T-cell (primary cell): ENCODE measurements at regions of chr7 and their contacts with region 1.

Region 1: DNA sequence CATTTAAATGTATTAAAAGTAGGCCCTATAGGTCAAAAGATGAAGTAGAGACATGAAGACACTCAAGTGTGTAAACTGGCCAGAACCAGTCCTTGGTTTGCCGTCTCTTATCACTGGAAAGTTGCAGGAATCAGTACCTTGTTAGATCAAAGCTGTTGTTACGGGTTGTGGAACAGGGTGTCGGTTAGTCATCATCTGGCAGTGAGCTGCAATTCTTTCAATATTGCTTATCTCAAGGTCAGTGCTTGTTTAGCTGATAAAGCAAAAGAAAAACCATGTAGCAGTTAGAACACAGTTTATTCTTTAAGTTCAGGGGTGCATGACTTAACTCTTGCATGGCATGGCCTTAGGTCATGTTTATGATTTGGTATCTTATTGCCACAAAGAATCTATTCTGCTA is 10.0 kb upstream of the SLC13A1 start:
- DNase-seq: no peak
- ATAC-seq: no peak
- H3K4me3 ChIP-seq: no peak overlapping the region
- H3K4me3 Mint-ChIP-seq: no peak overlapping the region
- H3K27ac ChIP-seq: no peak overlapping the region
- H3K27ac Mint-ChIP-seq: no peak overlapping the region
- H3K4me1 ChIP-seq: no peaks in the 10 kb centered on the region
- H3K4me1 Mint-ChIP-seq: no peaks in the 10 kb centered on the region
- H3K27me3 ChIP-seq: no peaks in the 10 kb centered on the region
- H3K27me3 Mint-ChIP-seq: no peaks in the 10 kb centered on the region

Region 2: DNA sequence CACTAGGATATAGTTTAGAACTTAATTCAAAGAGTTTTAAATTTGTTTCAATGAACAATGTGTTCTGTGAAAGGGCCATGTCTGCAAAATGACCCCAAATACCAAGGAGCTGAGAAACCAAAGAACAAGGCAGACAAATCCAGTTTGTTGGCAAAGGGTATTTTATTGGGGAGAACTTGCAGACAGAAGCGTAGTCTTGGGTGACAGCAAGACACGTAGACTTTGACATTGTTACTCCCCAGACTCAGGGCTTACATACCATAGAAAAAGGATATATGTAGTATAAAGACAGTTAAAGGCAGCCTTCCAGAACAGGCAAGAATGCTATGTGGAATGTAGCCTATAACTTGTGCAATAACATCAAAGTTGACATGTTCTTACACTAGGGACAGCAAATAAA is 119.3 kb before region 1 on chr7:
- CTCF ChIA-PET with region 1: no interaction called
- POLR2A ChIA-PET with region 1: no interaction called
- DNase-seq: no peak
- ATAC-seq: no peak
- H3K4me3 ChIP-seq: no peak overlapping the region
- H3K4me3 Mint-ChIP-seq: no peak overlapping the region
- H3K27ac ChIP-seq: no peak overlapping the region
- H3K27ac Mint-ChIP-seq: no peak overlapping the region
- H3K4me1 ChIP-seq: no peaks in the 10 kb centered on the region
- H3K4me1 Mint-ChIP-seq: no peaks in the 10 kb centered on the region
- H3K27me3 ChIP-seq: no peaks in the 10 kb centered on the region
- H3K27me3 Mint-ChIP-seq: no peaks in the 10 kb centered on the region

Region 3: GRCh38 chr7:125065546-125065945 is 1855.8 kb after region 1 on chr7:
- CTCF ChIA-PET with region 1: no interaction called
- POLR2A ChIA-PET with region 1: interaction called in 1 of 2 experiments, 11 read pairs
- DNase-seq: no peak
- ATAC-seq: no peak
- H3K4me3 ChIP-seq: no peak overlapping the region
- H3K4me3 Mint-ChIP-seq: no peak overlapping the region
- H3K27ac ChIP-seq: no peak overlapping the region
- H3K27ac Mint-ChIP-seq: no peak overlapping the region
- H3K4me1 ChIP-seq: no peaks in the 10 kb centered on the region
- H3K4me1 Mint-ChIP-seq: no peaks in the 10 kb centered on the region
- H3K27me3 ChIP-seq: no peaks in the 10 kb centered on the region
- H3K27me3 Mint-ChIP-seq: no peaks in the 10 kb centered on the region